ENCODE measurements at regions of chr4 and their contacts with region 1.

Region 1: DNA sequence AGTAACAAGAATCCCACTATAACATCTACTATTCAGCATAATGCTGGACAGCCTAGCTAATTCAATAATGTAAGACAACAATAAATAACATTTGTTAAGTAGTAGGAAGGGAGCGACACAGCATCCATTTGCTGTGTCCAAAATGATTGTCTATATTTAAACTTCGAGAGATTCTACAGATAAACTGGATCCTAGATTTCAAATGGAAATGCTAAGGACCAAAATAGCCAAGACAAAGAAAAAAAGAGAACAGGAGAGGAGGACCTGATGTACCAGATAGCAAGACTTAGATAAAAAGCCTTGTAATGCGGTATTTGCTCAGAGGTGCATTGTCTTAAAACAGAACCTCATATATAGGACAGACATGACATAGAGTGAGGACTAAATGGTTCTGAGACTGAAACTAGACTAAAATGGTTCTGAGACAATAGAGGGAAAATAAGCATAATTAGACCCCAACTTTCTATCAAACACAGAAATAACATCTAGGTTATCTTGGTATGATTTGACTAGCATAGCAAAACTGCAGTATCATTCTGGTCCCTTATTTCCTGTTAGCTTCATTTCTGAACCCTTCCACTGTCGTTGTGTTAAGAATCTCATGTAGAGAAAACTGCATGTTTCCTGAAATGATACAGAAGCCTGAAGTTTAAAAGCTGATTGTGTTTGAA is 3.8 kb downstream of the HPGDS start:
- DNase-seq: no peak
- H3K4me3 Mint-ChIP-seq: peak overlapping the region; percentile 48
- H3K27ac Mint-ChIP-seq: peak overlapping the region; percentile 78
- H3K4me1 Mint-ChIP-seq: peaks cover 19% of the 10 kb centered on the region
- H3K27me3 Mint-ChIP-seq: no peaks in the 10 kb centered on the region

Region 2: GRCh38 chr4:94207469-94208224 is 131.2 kb before region 1 on chr4 and contains the start of gene SMARCAD1:
- CTCF ChIA-PET with region 1: no interaction called
- POLR2A ChIA-PET with region 1: no interaction called
- intact Hi-C with region 1: loop called (anchors 5 kb)
- DNase-seq: peak; percentile 92
- H3K4me3 Mint-ChIP-seq: peak within 1 kb of the TSS; percentile 92
- H3K27ac Mint-ChIP-seq: peak within 1 kb of the TSS; percentile 99
- H3K4me1 Mint-ChIP-seq: peaks cover 33% of the 10 kb centered on the region
- H3K27me3 Mint-ChIP-seq: peaks cover 4% of the 10 kb centered on the region
- total RNA-seq, gene SMARCAD1: 26.5 to 28.0 TPM

Region 3: GRCh38 chr4:94349193-94349592 is 10.4 kb after region 1 on chr4:
- CTCF ChIA-PET with region 1: interaction called, 8 read pairs
- POLR2A ChIA-PET with region 1: interaction called, 8 read pairs
- intact Hi-C with region 1: loop called (anchors 1 kb)
- DNase-seq: no peak
- H3K4me3 Mint-ChIP-seq: no peak overlapping the region
- H3K27ac Mint-ChIP-seq: peak overlapping the region; percentile 30
- H3K4me1 Mint-ChIP-seq: peaks cover 23% of the 10 kb centered on the region
- H3K27me3 Mint-ChIP-seq: peaks cover 2% of the 10 kb centered on the region

Measured in activated CD4-positive, alpha-beta memory T cell treated with anti-CD3 and anti-CD28 coated beads for 36 hours (primary cell).